T-cell (primary cell): ENCODE measurements at regions of chrX and their contacts with region 1.

Region 1: DNA sequence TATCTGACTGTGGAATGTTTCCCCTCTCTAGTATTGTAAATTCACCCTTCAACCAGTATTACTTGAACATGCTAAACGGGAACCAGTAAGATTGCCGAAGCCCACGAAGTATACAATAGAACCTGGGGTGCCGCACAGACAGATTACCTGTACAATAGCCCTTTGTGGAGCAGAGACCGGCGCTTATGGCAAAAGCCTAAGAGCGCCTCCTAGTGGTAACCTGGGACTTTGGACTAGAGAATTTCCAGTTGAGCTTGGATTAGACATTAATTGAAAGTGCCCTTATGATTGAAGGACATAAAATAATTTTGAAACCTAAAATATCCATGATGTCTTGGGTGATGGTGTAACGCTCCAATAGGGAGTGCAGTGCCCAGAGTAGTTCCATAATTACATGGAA is 14.1 kb downstream of the ZNF157 start:
- DNase-seq: peak; percentile 28 to 87 (median 62)
- ATAC-seq: peak; percentile 54 to 73 (median 56)
- H3K4me3 ChIP-seq: no peak overlapping the region
- H3K4me3 Mint-ChIP-seq: no peak overlapping the region
- H3K27ac ChIP-seq: no peak overlapping the region
- H3K27ac Mint-ChIP-seq: no peak overlapping the region
- H3K4me1 ChIP-seq: peaks cover 11 to 14% of the 10 kb centered on the region in 2 experiments
- H3K4me1 Mint-ChIP-seq: peaks cover 19 to 33% (median 26%) of the 10 kb centered on the region in 3 donors
- H3K27me3 ChIP-seq: no peaks in the 10 kb centered on the region
- H3K27me3 Mint-ChIP-seq: peaks cover 0 to 7% of the 10 kb centered on the region in 2 donors

Region 2: GRCh38 chrX:47144626-47145394 is 239.7 kb before region 1 on chrX and contains the starts of genes NDUFB11 and RBM10:
- CTCF ChIA-PET with region 1: interaction called in 1 of 2 experiments, 5 read pairs
- POLR2A ChIA-PET with region 1: interaction called in 1 of 2 experiments, 13 read pairs
- DNase-seq: peak; percentile 65 to 91 (median 84)
- ATAC-seq: peak; percentile 88 to 92 (median 91)
- H3K4me3 ChIP-seq: peak within 1 kb of the TSS; percentile 74 to 92
- H3K4me3 Mint-ChIP-seq: peak within 1 kb of the TSS; percentile 95 to 99 (median 97)
- H3K27ac ChIP-seq: peak within 1 kb of the TSS; percentile 92
- H3K27ac Mint-ChIP-seq: peak within 1 kb of the TSS; percentile 96 to 97
- H3K4me1 ChIP-seq: peaks cover 3 to 35% of the 10 kb centered on the region in 2 experiments
- H3K4me1 Mint-ChIP-seq: peaks cover 26 to 43% (median 33%) of the 10 kb centered on the region in 3 donors
- H3K27me3 ChIP-seq: no peaks in the 10 kb centered on the region
- H3K27me3 Mint-ChIP-seq: peaks cover 0 to 6% of the 10 kb centered on the region in 2 donors
- total RNA-seq, gene NDUFB11: 52.9 to 64.1 (median 57.8) TPM
- total RNA-seq, gene RBM10: 37.3 to 60.3 (median 55.8) TPM

Region 3: DNA sequence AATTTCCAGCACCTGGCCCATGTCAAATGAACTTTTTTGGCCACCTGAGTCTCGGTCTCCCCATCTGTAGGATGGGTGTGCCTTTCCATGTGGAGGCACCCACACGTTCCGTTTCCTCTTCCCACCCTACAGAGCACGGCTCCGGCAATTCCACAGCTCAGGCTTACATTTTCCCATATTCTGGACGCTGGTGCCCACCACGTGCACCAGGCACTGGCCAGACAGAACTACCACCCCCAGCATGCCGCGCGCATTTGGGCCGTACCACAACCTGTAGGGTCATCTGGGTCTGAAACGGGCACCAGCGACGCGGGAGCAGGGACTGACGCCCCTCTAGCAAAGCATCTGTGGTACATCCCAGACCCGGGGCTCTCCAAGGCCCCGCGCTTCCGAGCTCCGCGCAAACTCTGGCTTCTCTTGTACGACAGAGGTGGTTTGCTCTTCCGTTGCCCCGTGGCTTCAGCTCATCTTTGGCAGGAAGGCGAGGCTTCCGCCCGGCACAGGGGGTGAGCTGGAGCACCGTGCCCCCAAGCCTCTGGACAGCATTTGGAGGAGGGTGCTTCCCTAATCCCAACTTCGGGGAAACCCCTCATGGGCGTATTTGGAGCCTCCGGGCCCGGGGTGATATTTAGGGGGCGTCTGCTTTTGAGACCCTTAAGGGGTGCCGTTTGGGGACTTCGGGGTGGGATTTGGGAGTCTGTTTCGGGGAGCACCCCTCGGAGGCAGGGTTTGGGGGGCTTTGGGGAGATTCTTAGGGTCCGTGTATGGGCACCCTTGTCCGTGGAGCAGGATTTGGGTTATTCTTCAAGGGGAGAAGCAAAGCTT is 193.8 kb before region 1 on chrX:
- CTCF ChIA-PET with region 1: interaction called, 7 to 14 read pairs
- POLR2A ChIA-PET with region 1: interaction called in 1 of 2 experiments, 3 read pairs
- DNase-seq: peak; percentile 48 to 89 (median 74)
- ATAC-seq: peak; percentile 71 to 79 (median 76)
- H3K4me3 ChIP-seq: peak overlapping the region; percentile 60 to 79
- H3K4me3 Mint-ChIP-seq: peak overlapping the region; percentile 85 to 92 (median 91)
- H3K27ac ChIP-seq: peak overlapping the region; percentile 79
- H3K27ac Mint-ChIP-seq: peak overlapping the region; percentile 92 to 94
- H3K4me1 ChIP-seq: peaks cover 17 to 34% of the 10 kb centered on the region in 2 experiments
- H3K4me1 Mint-ChIP-seq: peaks cover 33 to 40% (median 37%) of the 10 kb centered on the region in 3 donors
- H3K27me3 ChIP-seq: no peaks in the 10 kb centered on the region
- H3K27me3 Mint-ChIP-seq: peaks cover 0 to 3% of the 10 kb centered on the region in 2 donors

Region 4: GRCh38 chrX:47623540-47624027 is 239.1 kb after region 1 on chrX:
- CTCF ChIA-PET with region 1: no interaction called
- POLR2A ChIA-PET with region 1: no interaction called
- DNase-seq: peak in 27 of 35 experiments; percentile 15 to 56 (median 38)
- ATAC-seq: peak; percentile 58 to 79 (median 62)
- H3K4me3 ChIP-seq: peak overlapping the region in 1 of 2 donors; percentile 47
- H3K4me3 Mint-ChIP-seq: peak overlapping the region; percentile 81 to 83 (median 82)
- H3K27ac ChIP-seq: no peak overlapping the region
- H3K27ac Mint-ChIP-seq: peak overlapping the region in 1 of 2 donors; percentile 55
- H3K4me1 ChIP-seq: peaks cover 3 to 29% of the 10 kb centered on the region in 2 experiments
- H3K4me1 Mint-ChIP-seq: peaks cover 17 to 26% (median 20%) of the 10 kb centered on the region in 3 donors
- H3K27me3 ChIP-seq: peaks cover 0 to 6% of the 10 kb centered on the region in 2 experiments
- H3K27me3 Mint-ChIP-seq: peaks cover 0 to 10% of the 10 kb centered on the region in 2 donors